ENCODE measurements at regions of chr2 and their contacts with region 1.

Region 1: DNA sequence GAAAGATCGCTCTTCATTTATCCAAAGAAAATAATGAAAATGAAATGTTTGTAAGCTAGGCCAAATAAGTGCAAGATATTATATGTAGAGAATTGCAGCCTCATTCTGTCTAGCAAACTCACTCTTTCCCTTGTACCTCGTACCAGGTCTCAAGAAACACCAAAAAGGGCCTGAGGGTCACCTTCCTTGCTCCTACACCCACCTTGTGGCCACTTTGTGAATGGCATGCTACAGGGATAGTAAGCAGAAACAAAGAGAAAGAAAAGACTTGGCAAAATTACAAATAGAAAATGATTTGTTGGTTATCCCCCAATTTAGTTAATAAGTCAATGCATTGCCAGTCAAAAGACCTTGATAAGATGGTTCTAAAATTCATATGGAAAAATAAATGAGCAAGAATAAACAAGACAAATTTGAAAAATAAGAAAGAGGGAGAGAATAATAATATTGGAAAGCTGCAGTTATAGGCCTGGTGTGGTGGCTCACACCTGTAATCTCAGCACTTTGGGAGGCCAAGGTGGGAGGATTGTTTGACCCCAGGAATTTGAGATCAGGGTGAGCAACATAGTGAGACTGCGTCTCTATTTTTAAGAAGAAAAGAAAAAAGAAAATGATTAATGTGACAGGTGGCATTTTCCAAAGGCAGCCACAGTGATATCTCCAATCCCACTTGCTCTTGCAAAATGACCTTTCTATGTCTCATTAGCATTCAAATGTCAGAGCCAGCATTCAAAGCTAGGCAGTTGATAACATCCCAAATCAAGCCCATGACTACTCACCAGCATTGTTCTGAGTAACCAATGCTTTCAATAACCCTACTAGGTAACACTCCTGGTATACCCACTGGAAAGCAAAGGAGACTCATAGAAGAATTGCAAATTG is 38.8 kb upstream of the BMP10 start:
- DNase-seq: peak; percentile 58
- ATAC-seq: peak; percentile 61

Region 2: GRCh38 chr2:68709421-68709911 is 200.6 kb before region 1 on chr2:
- intact Hi-C with region 1: loop called (anchors 10 kb)
- DNase-seq: no peak
- ATAC-seq: peak; percentile 68

Region 3: GRCh38 chr2:68751397-68752339 is 158.4 kb before region 1 on chr2:
- intact Hi-C with region 1: loop called (anchors 5 kb)
- DNase-seq: peak; percentile 93
- ATAC-seq: peak; percentile 95

Measured in left ventricle myocardium superior (tissue), 1 donor.